Activated CD4-positive, alpha-beta T cell treated with anti-CD3 and anti-CD28 coated beads, Interleukin-2, amount 10 ng/mL, durations not matched to agents 24 days and 14 days (primary cell): ENCODE measurements at regions of chr9 and their contacts with region 1.

Region 1: GRCh38 chr9:112750111-112750767 is at the start of gene SNX30:
- DNase-seq: peak; percentile 95
- H3K4me3 Mint-ChIP-seq: peak within 1 kb of the TSS; percentile 82
- H3K27ac Mint-ChIP-seq: peak within 1 kb of the TSS; percentile 86
- H3K4me1 Mint-ChIP-seq: peaks cover 51% of the 10 kb centered on the region
- H3K27me3 Mint-ChIP-seq: peaks cover 4% of the 10 kb centered on the region
- total RNA-seq, gene SNX30: 2.6 and 2.9 TPM in 2 replicates

Region 2: GRCh38 chr9:112119225-112120029 is 630.8 kb before region 1 on chr9:
- intact Hi-C with region 1: no loop called
- DNase-seq: no peak
- H3K4me3 Mint-ChIP-seq: no peak overlapping the region
- H3K27ac Mint-ChIP-seq: peak overlapping the region; percentile 16
- H3K4me1 Mint-ChIP-seq: peaks cover 10% of the 10 kb centered on the region
- H3K27me3 Mint-ChIP-seq: no peaks in the 10 kb centered on the region

Region 3: GRCh38 chr9:112705768-112706427 is 44.3 kb before region 1 on chr9:
- intact Hi-C with region 1: no loop called
- DNase-seq: no peak
- H3K4me3 Mint-ChIP-seq: no peak overlapping the region
- H3K27ac Mint-ChIP-seq: no peak overlapping the region
- H3K4me1 Mint-ChIP-seq: peaks cover 12% of the 10 kb centered on the region
- H3K27me3 Mint-ChIP-seq: no peaks in the 10 kb centered on the region

Region 4: DNA sequence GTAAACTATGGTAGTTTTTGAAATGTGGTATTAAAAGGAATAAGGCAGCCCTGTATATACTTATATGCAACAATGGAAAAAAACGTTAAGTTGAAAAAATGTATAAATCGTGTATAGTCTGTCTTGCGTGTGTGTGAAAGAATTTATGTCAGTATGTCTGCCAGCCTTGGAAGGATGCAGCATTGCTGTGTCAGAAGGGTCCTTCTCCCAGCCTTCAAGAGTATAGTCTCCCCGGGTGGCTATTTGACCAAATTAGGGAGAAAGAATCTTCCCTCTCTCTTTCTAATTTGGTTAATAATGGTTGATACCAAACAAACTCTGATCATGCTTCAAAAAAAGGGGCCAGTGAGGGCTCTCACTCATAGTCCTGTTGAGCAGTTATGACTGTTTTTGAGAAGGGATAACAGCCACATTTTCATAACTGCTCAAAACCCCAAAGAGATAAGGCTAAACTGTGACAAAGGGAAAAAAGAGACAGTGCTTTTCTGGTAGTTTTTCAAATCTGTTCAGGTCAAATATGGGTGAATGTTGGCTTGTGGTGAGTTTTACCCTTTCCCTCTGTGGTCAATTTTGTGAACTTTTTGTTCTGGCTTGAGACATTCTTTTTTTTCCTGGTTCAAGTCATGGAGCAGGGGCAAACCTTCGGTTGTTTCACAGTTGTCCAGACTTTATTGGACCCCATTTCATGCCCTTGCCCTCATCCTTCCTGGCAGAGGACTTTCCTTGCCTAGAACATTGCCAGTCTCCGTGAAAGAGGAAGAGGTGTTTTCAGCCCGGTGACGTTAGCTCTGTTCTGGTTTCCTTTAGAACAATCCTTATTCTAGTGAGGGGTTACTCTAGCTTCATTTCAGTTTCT is 21.3 kb after region 1 on chr9:
- intact Hi-C with region 1: loop called (anchors 2 kb)
- DNase-seq: no peak
- H3K4me3 Mint-ChIP-seq: peak overlapping the region; percentile 31
- H3K27ac Mint-ChIP-seq: peak overlapping the region; percentile 35
- H3K4me1 Mint-ChIP-seq: peaks cover 27% of the 10 kb centered on the region
- H3K27me3 Mint-ChIP-seq: peaks cover 3% of the 10 kb centered on the region

Region 5: DNA sequence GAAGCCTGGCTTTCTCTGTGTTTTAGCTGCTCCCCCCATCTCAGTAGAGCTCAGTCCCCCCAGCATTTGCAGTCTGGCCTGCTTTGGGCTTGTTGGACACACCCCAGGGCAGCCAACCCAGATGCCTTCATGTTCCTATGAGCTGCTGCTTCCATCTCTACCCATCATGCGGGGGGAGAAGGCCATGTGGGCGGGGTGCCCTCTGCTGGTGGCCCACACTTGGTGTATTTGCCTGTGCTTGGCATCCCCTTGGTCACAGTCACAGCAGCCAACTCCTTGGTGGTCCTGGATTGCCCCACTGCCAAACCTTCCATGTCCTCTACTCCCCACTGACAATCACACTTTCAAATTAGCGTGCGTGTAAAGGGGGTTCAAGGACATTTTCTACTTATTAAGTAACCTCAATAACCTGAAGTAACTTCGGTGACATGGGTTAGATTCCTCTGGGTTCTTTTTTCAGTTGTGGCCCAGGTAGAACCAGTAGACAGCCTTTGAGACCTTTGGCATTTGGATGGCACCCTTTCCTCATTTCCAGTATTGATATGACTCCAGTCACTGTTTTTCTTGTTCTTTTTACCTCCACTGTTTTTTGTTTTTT is 43.1 kb after region 1 on chr9:
- intact Hi-C with region 1: loop called (anchors 5 kb)
- DNase-seq: peak; percentile 93
- H3K4me3 Mint-ChIP-seq: no peak overlapping the region
- H3K27ac Mint-ChIP-seq: no peak overlapping the region
- H3K4me1 Mint-ChIP-seq: peaks cover 4% of the 10 kb centered on the region
- H3K27me3 Mint-ChIP-seq: no peaks in the 10 kb centered on the region

Region 6: GRCh38 chr9:113150670-113151611 is 400.7 kb after region 1 on chr9 and contains the start of gene SLC31A2:
- intact Hi-C with region 1: loop called (anchors 10 kb)
- DNase-seq: peak; percentile 97
- H3K4me3 Mint-ChIP-seq: peak within 1 kb of the TSS; percentile 84
- H3K27ac Mint-ChIP-seq: peak within 1 kb of the TSS; percentile 80
- H3K4me1 Mint-ChIP-seq: peaks cover 28% of the 10 kb centered on the region
- H3K27me3 Mint-ChIP-seq: peaks cover 2% of the 10 kb centered on the region
- total RNA-seq, gene SLC31A2: 4.5 and 5.3 TPM in 2 replicates